Activated CD4-positive, alpha-beta T cell treated with anti-CD3 and anti-CD28 coated beads, Interleukin-2, amount 10 ng/mL, durations not matched to agents 24 days and 14 days (primary cell): ENCODE measurements at regions of chr2 and their contacts with region 1.

Region 1: GRCh38 chr2:178450774-178451525 is at the starts of genes PJVK and PRKRA:
- DNase-seq: peak; percentile 99
- H3K4me3 Mint-ChIP-seq: peak within 1 kb of the TSS; percentile 94
- H3K27ac Mint-ChIP-seq: peak within 1 kb of the TSS; percentile 98
- H3K4me1 Mint-ChIP-seq: peaks cover 25% of the 10 kb centered on the region
- H3K27me3 Mint-ChIP-seq: peaks cover 7% of the 10 kb centered on the region
- total RNA-seq, gene PJVK: 2.0 and 2.3 TPM in 2 replicates
- total RNA-seq, gene PRKRA: 52.4 and 61.2 TPM in 2 replicates

Region 2: DNA sequence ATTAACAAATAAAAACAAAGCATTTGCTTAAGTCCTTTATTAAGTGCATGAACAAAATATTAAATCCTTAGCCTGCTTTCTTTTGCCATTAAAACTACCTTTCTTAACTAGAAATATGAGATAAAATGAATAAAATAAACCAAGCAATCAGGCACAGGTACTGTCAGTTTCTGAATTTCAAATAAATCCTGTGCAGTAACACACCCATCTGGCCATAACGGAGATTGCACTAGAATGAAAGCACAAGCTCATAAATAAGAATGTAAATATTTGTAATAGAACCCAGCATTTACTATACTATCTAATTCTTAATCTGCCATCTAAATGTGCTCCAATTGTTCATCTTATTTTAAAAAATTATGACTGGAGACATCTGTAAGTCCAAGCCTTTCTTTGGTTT is 31.8 kb before region 1 on chr2:
- intact Hi-C with region 1: no loop called
- DNase-seq: no peak
- H3K4me3 Mint-ChIP-seq: no peak overlapping the region
- H3K27ac Mint-ChIP-seq: no peak overlapping the region
- H3K4me1 Mint-ChIP-seq: peaks cover 28% of the 10 kb centered on the region
- H3K27me3 Mint-ChIP-seq: no peaks in the 10 kb centered on the region

Region 3: DNA sequence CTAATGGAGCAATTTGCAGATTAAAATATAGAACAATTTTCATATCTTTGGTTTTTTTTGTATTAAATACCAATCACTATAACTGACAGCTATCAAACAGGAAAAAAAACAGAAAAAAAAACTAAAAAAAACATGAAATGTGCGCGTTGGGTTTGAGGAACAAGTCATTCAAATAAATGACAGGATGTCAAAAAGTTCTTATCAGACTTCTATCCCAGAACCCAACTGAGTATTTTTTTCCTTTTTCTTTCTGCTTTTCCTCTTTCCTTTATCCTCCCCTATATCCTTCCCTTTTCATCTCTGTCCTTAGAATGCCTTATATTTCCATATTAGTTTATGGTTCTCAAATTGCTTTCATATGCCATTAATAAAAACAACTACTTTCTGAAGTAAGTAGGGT is 14.3 kb before region 1 on chr2:
- intact Hi-C with region 1: no loop called
- DNase-seq: no peak
- H3K4me3 Mint-ChIP-seq: no peak overlapping the region
- H3K27ac Mint-ChIP-seq: no peak overlapping the region
- H3K4me1 Mint-ChIP-seq: no peaks in the 10 kb centered on the region
- H3K27me3 Mint-ChIP-seq: peaks cover 3% of the 10 kb centered on the region

Region 4: GRCh38 chr2:178514664-178515063 is 63.7 kb after region 1 on chr2:
- intact Hi-C with region 1: loop called (anchors 2 kb)
- DNase-seq: peak; percentile 77
- H3K4me3 Mint-ChIP-seq: peak overlapping the region; percentile 22
- H3K27ac Mint-ChIP-seq: peak overlapping the region; percentile 62
- H3K4me1 Mint-ChIP-seq: peaks cover 12% of the 10 kb centered on the region
- H3K27me3 Mint-ChIP-seq: no peaks in the 10 kb centered on the region

Region 5: GRCh38 chr2:178522950-178523595 is 72.1 kb after region 1 on chr2:
- intact Hi-C with region 1: loop called (anchors 1 kb)
- DNase-seq: peak; percentile 96
- H3K4me3 Mint-ChIP-seq: peak overlapping the region; percentile 95
- H3K27ac Mint-ChIP-seq: peak overlapping the region; percentile 91
- H3K4me1 Mint-ChIP-seq: peaks cover 37% of the 10 kb centered on the region
- H3K27me3 Mint-ChIP-seq: no peaks in the 10 kb centered on the region